Activated CD8-positive, alpha-beta T cell treated with anti-CD3 and anti-CD28 coated beads, Interleukin-2, amount 10 ng/mL, durations not matched to agents 7 days and 5 days (primary cell): ENCODE measurements at regions of chr20 and their contacts with region 1.

Region 1: DNA sequence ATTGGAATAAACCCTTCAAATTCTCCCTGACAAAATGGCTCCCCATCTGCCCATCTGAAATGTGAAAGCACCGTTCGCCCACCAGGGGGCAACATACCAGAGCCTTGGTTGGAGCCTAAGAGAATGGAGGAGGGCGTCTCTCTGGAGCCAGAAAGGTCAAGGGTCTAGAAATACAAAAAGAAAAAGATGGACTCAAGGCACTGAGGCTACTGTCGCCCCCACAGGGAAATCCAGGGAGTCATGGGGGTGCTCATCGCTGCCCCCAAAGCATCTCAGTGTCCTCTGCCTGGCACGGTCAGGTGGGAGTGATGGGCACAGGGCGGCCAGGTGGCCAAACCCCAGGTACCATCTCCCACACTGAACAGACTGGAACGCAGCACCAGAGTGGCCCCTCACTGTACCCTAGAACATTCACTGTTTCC is 136.3 kb downstream of the ZMYND8 start:
- DNase-seq: peak; percentile 64
- ATAC-seq: no peak
- H3K4me3 Mint-ChIP-seq: no peak overlapping the region
- H3K27ac Mint-ChIP-seq: no peak overlapping the region
- H3K4me1 Mint-ChIP-seq: peaks cover 14% of the 10 kb centered on the region
- H3K27me3 Mint-ChIP-seq: no peaks in the 10 kb centered on the region

Region 2: GRCh38 chr20:47181056-47181862 is 38.9 kb before region 1 on chr20:
- CTCF ChIA-PET with region 1: no interaction called
- POLR2A ChIA-PET with region 1: no interaction called
- DNase-seq: peak; percentile 50
- ATAC-seq: peak; percentile 57
- H3K4me3 Mint-ChIP-seq: no peak overlapping the region
- H3K27ac Mint-ChIP-seq: no peak overlapping the region
- H3K4me1 Mint-ChIP-seq: peaks cover 2% of the 10 kb centered on the region
- H3K27me3 Mint-ChIP-seq: peaks cover 5% of the 10 kb centered on the region

Region 3: GRCh38 chr20:47205577-47206498 is 14.3 kb before region 1 on chr20:
- CTCF ChIA-PET with region 1: interaction called, 16 read pairs
- POLR2A ChIA-PET with region 1: no interaction called
- DNase-seq: peak; percentile 74
- ATAC-seq: peak; percentile 68
- H3K4me3 Mint-ChIP-seq: no peak overlapping the region
- H3K27ac Mint-ChIP-seq: peak overlapping the region; percentile 56
- H3K4me1 Mint-ChIP-seq: peaks cover 7% of the 10 kb centered on the region
- H3K27me3 Mint-ChIP-seq: no peaks in the 10 kb centered on the region

Region 4: GRCh38 chr20:47230811-47231256 is 10.7 kb after region 1 on chr20:
- CTCF ChIA-PET with region 1: interaction called, 18 read pairs
- POLR2A ChIA-PET with region 1: interaction called, 3 read pairs
- DNase-seq: no peak
- ATAC-seq: no peak
- H3K4me3 Mint-ChIP-seq: no peak overlapping the region
- H3K27ac Mint-ChIP-seq: no peak overlapping the region
- H3K4me1 Mint-ChIP-seq: no peaks in the 10 kb centered on the region
- H3K27me3 Mint-ChIP-seq: no peaks in the 10 kb centered on the region